HEK293 (cell line): ENCODE measurements at regions of chr6 and their contacts with region 1.

Region 1: GRCh38 chr6:139375232-139376016 is 976 bp upstream of the CITED2 start:
- H3K4me3 ChIP-seq: peak overlapping the region; percentile 79
- H3K27ac ChIP-seq: peak overlapping the region; percentile 94
- H3K4me1 ChIP-seq: peaks cover 16% of the 10 kb centered on the region
- CTCF ChIP-seq: 0 out of 2 replicates have a peak, but pooled peaks have one; percentile 40

Region 2: GRCh38 chr6:139313784-139314545 is 61.5 kb before region 1 on chr6:
- CTCF ChIA-PET with region 1: no interaction called
- POLR2A ChIA-PET with region 1: no interaction called
- H3K4me3 ChIP-seq: no peak overlapping the region
- H3K27ac ChIP-seq: no peak overlapping the region
- H3K4me1 ChIP-seq: no peaks in the 10 kb centered on the region
- CTCF ChIP-seq: no peak

Region 3: DNA sequence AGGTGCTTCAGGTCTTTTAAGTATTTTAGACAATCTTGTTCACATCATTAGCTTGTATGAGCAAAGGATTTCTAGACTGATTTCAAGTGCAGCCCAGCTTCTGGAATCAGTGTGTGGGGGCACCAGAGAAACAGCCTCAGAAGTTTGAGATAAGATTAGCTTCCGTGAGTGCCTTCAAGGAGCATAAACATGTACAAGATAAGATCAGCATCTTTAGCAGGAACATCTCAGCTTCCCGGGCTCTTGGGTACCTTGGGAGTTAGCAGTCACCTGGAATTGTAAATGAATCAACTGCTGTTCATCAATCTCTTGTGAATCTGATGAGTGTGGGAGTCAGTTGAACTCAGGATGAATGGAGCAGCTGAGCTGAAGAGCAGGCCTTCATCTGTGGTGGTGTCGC is 11.0 kb after region 1 on chr6:
- CTCF ChIA-PET with region 1: interaction called, 3 read pairs
- POLR2A ChIA-PET with region 1: interaction called, 15 read pairs
- H3K4me3 ChIP-seq: no peak overlapping the region
- H3K27ac ChIP-seq: no peak overlapping the region
- H3K4me1 ChIP-seq: no peaks in the 10 kb centered on the region
- CTCF ChIP-seq: no peak

Region 4: GRCh38 chr6:139433631-139434419 is 58.4 kb after region 1 on chr6:
- CTCF ChIA-PET with region 1: no interaction called
- POLR2A ChIA-PET with region 1: interaction called, 12 read pairs
- H3K4me3 ChIP-seq: no peak overlapping the region
- H3K27ac ChIP-seq: no peak overlapping the region
- H3K4me1 ChIP-seq: no peaks in the 10 kb centered on the region
- CTCF ChIP-seq: no peak

Region 5: DNA sequence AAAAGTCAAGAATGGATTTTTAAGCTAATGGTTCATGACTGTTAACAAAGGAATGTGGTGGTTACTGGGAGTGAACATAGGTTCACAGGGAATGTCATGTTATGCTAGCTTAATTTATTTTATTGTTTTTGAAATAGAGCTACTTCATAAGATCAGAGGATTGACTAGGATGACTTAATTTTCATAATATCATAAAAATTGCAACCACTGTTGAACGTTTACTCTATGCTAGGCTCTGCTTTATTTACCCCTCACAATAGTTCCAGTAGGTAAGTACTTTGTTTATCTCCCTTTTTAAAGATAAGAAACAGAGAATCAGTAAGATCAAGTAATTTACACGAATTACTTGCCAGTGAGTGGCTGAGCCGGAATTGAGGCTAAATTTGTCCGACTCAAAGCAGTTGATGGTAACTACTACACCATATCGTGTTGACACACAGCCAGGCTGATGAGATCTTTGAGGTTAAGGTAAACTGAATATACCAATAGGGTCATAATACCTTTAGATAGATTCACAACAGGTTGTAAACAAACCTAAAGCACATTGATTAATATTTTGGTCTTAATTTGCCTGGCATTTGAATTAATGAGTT is 193.6 kb after region 1 on chr6:
- CTCF ChIA-PET with region 1: no interaction called
- POLR2A ChIA-PET with region 1: interaction called, 13 read pairs
- H3K4me3 ChIP-seq: no peak overlapping the region
- H3K27ac ChIP-seq: no peak overlapping the region
- H3K4me1 ChIP-seq: peaks cover 4% of the 10 kb centered on the region; the same call in 1 of the 2 replicates
- CTCF ChIP-seq: no peak

Region 6: DNA sequence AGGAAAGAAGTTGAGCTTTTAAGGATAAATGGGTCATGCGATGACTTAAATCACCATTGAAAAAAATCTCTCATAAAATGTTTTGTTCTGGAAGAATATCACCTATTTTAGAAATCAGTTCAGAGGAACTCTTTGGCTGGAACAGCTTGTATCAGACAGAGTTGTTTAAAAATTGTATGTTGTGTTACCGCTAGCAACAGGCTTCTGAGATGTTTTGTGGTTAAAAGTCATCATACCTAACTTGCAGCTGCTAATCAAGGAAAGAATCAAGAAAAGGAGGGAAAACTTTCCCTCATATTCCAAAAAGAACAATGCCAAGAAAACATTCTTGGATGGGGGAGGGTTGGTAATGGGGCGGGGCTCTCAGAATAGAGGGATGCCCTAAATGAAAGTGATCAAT is 219.8 kb after region 1 on chr6:
- CTCF ChIA-PET with region 1: interaction called, 4 read pairs
- POLR2A ChIA-PET with region 1: interaction called, 17 read pairs
- H3K4me3 ChIP-seq: no peak overlapping the region
- H3K27ac ChIP-seq: no peak overlapping the region
- H3K4me1 ChIP-seq: no peaks in the 10 kb centered on the region
- CTCF ChIP-seq: no peak

Region 7: GRCh38 chr6:139778688-139779087 is 403.3 kb after region 1 on chr6:
- CTCF ChIA-PET with region 1: interaction called, 3 read pairs
- POLR2A ChIA-PET with region 1: interaction called, 22 read pairs
- H3K4me3 ChIP-seq: no peak overlapping the region
- H3K27ac ChIP-seq: no peak overlapping the region
- H3K4me1 ChIP-seq: peaks cover 5% of the 10 kb centered on the region; the same call in 1 of the 2 replicates
- CTCF ChIP-seq: no peak